ENCODE measurements at regions of chr20 and their contacts with region 1.

Region 1: GRCh38 chr20:52127309-52127708 is 64.3 kb downstream of the ZFP64 start:
- DNase-seq: no peak
- ATAC-seq: no peak
- H3K4me3 Mint-ChIP-seq: no peak overlapping the region
- H3K27ac Mint-ChIP-seq: no peak overlapping the region
- H3K4me1 Mint-ChIP-seq: peaks cover 4% of the 10 kb centered on the region
- H3K27me3 Mint-ChIP-seq: no peaks in the 10 kb centered on the region
- CTCF ChIP-seq: no peak

Region 2: DNA sequence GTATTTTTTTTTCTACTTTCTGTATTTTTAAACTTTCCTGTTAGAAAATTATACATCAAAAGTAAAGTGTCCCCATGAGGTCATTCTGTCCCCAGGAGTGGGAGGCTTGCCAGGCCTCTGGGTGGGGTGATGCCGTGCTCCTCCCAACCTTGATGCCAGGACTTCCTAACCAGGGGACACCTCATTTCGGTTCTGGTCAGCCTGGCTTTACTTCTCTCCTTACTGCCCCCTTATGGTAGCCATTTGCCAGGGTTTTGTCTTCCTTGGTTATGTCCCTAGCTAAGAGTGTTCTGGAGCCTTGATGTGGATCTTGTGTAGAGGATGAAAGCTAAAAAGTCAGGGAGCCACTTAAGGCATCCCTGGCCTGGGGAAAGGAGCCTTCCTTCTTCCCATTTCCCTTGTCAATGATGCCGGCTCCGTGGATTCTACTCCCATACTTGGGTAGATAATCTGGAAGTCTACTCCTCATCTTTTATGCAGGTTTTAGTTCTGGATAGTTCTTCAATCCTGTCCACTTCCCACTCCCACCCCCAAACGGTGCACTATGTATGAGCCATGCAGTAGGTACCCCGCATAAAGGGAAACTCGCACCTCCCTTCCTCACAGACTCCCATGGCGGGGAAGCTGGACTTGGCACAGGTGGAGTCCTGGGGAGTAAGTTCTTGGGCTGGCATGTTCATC is 160.9 kb before region 1 on chr20:
- CTCF ChIA-PET with region 1: no interaction called
- POLR2A ChIA-PET with region 1: no interaction called
- intact Hi-C with region 1: no loop called
- DNase-seq: peak; percentile 30
- ATAC-seq: no peak
- H3K4me3 Mint-ChIP-seq: no peak overlapping the region
- H3K27ac Mint-ChIP-seq: no peak overlapping the region
- H3K4me1 Mint-ChIP-seq: no peaks in the 10 kb centered on the region
- H3K27me3 Mint-ChIP-seq: peaks cover 4% of the 10 kb centered on the region
- CTCF ChIP-seq: peak; percentile 28

Region 3: DNA sequence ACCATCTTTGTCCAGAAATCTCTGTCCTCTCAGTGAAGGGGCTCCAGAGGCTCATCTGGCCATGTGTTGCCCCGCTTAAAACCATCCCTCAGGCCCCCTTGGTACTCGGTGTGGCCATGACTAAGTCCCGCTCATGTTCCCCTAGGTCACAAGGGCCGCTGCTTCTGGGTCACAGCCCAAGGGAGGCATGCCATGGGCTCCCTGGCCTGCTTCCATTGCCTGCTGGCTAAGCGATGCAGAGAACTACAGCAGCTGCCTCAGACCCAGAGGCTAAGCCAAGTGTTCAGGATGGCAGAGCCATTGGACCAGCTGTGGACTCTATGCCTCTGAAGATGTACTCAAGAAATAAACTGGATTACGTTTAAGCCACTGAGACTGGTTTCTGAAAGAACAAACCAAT is 31.2 kb before region 1 on chr20:
- CTCF ChIA-PET with region 1: no interaction called
- POLR2A ChIA-PET with region 1: no interaction called
- intact Hi-C with region 1: no loop called
- DNase-seq: no peak
- ATAC-seq: no peak
- H3K4me3 Mint-ChIP-seq: no peak overlapping the region
- H3K27ac Mint-ChIP-seq: no peak overlapping the region
- H3K4me1 Mint-ChIP-seq: no peaks in the 10 kb centered on the region
- H3K27me3 Mint-ChIP-seq: no peaks in the 10 kb centered on the region
- CTCF ChIP-seq: no peak

Region 4: DNA sequence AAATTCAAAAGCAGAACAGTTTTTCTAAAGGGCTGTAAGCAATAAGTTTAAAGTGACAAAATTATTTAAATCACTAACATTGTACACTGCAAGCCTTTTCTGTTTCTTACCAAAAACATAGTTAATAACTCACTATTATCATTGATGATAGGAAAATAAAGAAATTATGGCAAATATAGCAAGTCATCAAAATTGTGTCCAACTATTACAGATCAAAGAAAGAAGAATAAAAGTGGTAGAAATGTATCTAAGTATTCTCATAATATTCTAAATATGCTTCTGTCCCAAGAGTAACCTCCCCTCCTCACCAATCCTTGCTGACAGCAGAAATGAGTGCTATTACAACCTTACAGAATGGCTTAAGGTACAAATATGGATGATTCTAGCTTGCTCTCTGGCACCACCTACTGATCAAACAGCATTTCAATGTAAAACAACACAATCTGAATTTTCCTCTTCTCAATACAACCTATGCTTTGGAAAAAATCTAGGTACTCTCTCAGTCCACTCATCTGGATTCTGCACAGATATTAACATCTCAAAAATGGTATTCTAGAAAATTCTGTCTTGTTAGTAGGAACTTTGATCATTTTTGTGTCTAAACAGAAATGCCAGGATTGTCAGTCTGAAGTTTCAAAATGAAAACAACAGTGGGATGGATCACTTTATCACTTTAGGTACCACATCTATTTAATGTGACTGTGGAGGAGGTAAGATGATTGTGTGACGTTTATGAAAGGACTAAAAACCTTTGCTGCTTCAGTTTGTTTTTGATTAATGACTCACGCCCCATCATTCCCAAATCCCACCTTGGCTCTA is 23.3 kb after region 1 on chr20:
- CTCF ChIA-PET with region 1: interaction called, 33 read pairs
- POLR2A ChIA-PET with region 1: no interaction called
- intact Hi-C with region 1: no loop called
- DNase-seq: peak; percentile 24
- ATAC-seq: peak; percentile 56
- H3K4me3 Mint-ChIP-seq: no peak overlapping the region
- H3K27ac Mint-ChIP-seq: no peak overlapping the region
- H3K4me1 Mint-ChIP-seq: no peaks in the 10 kb centered on the region
- H3K27me3 Mint-ChIP-seq: no peaks in the 10 kb centered on the region
- CTCF ChIP-seq: peak; percentile 79

Region 5: GRCh38 chr20:52172392-52173047 is 45.2 kb after region 1 on chr20:
- CTCF ChIA-PET with region 1: no interaction called
- POLR2A ChIA-PET with region 1: no interaction called
- intact Hi-C with region 1: no loop called
- DNase-seq: no peak
- ATAC-seq: no peak
- H3K4me3 Mint-ChIP-seq: no peak overlapping the region
- H3K27ac Mint-ChIP-seq: no peak overlapping the region
- H3K4me1 Mint-ChIP-seq: peaks cover 15% of the 10 kb centered on the region
- H3K27me3 Mint-ChIP-seq: no peaks in the 10 kb centered on the region
- CTCF ChIP-seq: no peak

Measured in activated CD8-positive, alpha-beta T cell treated with anti-CD3 and anti-CD28 coated beads for 36 hours (primary cell).